Endothelial cell of umbilical vein (primary cell): ENCODE measurements at regions of chr5 and their contacts with region 1.

Region 1: GRCh38 chr5:127959152-127959764 is 124.3 kb upstream of the SLC12A2 start:
- DNase-seq: peak; percentile 86
- H3K4me3 ChIP-seq: no peak overlapping the region
- H3K27ac ChIP-seq: peak overlapping the region; percentile 64
- H3K4me1 ChIP-seq: peaks cover 44% of the 10 kb centered on the region
- H3K27me3 ChIP-seq: no peaks in the 10 kb centered on the region
- CTCF ChIP-seq: no peak
- POLR2A ChIP-seq: no peak

Region 2: DNA sequence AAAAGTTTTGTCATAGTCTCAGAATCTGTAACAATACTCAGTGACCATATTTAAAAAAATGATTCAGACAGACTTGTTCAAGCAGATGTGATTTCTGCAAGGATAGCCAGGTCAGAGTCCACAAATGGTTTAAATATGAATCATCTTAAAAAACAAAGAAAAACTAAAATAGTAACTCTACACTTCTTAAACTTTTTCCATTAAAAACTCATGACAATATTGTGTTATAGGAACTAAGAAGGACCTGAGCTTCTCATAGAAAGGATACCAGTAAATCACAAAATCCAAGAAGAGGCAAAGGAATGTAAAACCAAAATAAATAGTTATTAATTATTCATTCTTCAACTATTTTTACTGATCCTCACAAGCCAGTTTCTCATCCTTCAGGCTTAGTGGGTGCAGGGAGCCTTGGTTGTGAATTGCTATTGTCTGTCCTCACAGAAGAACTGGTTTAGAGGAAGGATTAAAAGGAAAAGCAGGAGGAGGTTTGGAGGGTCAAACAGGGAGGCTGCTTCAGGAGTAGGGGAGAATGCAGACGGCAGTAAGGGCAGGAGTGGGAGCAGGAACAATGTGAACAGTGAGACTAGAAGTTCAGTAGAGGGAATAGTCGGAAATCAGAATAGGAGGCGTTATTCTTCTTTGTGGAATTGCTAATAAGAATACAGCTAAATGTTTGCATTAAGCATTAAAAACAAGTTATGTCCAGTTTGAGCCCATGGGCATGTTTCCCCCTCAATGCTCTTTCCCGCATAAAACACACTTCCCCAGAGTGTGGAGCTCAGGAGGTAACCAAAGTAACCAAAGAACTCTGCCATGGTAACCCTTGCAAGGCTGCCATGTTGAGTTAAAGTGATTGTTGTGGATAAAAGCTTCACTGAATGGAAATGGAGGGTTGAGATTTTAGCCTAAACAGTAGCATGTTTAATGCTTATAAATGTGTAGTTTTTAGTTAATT is 145.3 kb before region 1 on chr5:
- CTCF ChIA-PET with region 1: no interaction called
- POLR2A ChIA-PET with region 1: no interaction called
- dilution Hi-C with region 1: no loop called
- intact Hi-C with region 1: loop called (anchors 2 kb)
- DNase-seq: peak; percentile 83
- H3K4me3 ChIP-seq: no peak overlapping the region
- H3K27ac ChIP-seq: peak overlapping the region; percentile 76
- H3K4me1 ChIP-seq: peaks cover 23% of the 10 kb centered on the region
- H3K27me3 ChIP-seq: no peaks in the 10 kb centered on the region
- CTCF ChIP-seq: no peak
- POLR2A ChIP-seq: no peak

Region 3: GRCh38 chr5:127885176-127885575 is 74.1 kb before region 1 on chr5:
- CTCF ChIA-PET with region 1: interaction called, 4 read pairs
- POLR2A ChIA-PET with region 1: no interaction called
- dilution Hi-C with region 1: no loop called
- intact Hi-C with region 1: loop called (anchors 2 kb)
- DNase-seq: peak; percentile 25
- H3K4me3 ChIP-seq: no peak overlapping the region
- H3K27ac ChIP-seq: no peak overlapping the region
- H3K4me1 ChIP-seq: peaks cover 14% of the 10 kb centered on the region
- H3K27me3 ChIP-seq: no peaks in the 10 kb centered on the region
- CTCF ChIP-seq: no peak
- POLR2A ChIP-seq: no peak

Region 4: DNA sequence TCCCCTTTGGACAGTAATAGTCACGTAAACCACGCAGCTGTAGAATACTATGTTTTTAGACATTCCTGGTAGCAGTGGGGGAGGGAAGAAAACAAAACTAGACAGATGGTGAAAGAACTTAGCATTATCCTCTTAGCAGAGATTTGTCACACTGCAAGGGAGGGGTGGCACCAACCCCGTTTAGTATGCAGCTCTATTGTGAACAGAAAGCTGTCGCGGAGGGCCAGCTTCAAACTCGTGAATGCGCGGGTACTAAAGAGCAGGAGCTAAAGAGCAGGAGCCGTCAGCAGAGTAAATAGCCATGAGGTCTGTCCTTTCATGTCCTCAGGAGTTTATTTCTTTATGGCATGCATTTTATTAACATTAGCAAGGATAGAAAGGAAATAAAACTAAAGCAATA is 17.6 kb before region 1 on chr5:
- CTCF ChIA-PET with region 1: interaction called, 3 read pairs
- POLR2A ChIA-PET with region 1: no interaction called
- dilution Hi-C with region 1: no loop called
- intact Hi-C with region 1: loop called (anchors 1 kb)
- DNase-seq: no peak
- H3K4me3 ChIP-seq: no peak overlapping the region
- H3K27ac ChIP-seq: no peak overlapping the region
- H3K4me1 ChIP-seq: peaks cover 8% of the 10 kb centered on the region
- H3K27me3 ChIP-seq: no peaks in the 10 kb centered on the region
- CTCF ChIP-seq: no peak
- POLR2A ChIP-seq: no peak

Region 5: DNA sequence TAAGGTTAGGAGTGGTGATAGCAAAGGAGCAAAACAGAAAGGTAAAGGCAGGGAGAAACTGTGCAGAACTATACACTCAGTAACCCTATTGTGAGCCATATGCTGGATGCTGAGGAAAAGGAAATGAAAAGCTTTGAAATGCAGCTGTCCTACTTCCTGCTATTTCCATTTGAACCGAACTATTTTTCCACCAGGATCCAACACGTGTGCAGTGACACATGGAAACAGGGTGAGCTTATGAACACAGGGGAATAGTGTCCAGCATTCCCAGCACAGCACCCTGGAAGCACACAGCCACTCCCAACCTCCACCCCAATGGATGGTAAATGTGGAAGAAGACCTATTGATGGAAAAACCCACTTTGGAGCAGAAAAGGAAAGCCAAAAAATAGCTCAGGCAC is 55.3 kb after region 1 on chr5:
- CTCF ChIA-PET with region 1: interaction called, 3 read pairs
- POLR2A ChIA-PET with region 1: no interaction called
- dilution Hi-C with region 1: no loop called
- intact Hi-C with region 1: loop called (anchors 2 kb)
- DNase-seq: peak; percentile 64
- H3K4me3 ChIP-seq: no peak overlapping the region
- H3K27ac ChIP-seq: no peak overlapping the region
- H3K4me1 ChIP-seq: peaks cover 23% of the 10 kb centered on the region
- H3K27me3 ChIP-seq: no peaks in the 10 kb centered on the region
- CTCF ChIP-seq: no peak
- POLR2A ChIP-seq: no peak

Region 6: GRCh38 chr5:128201065-128201926 is 242.0 kb after region 1 on chr5:
- CTCF ChIA-PET with region 1: interaction called, 7 read pairs
- POLR2A ChIA-PET with region 1: no interaction called
- dilution Hi-C with region 1: no loop called
- intact Hi-C with region 1: loop called (anchors 1 kb)
- DNase-seq: peak; percentile 63
- H3K4me3 ChIP-seq: no peak overlapping the region
- H3K27ac ChIP-seq: no peak overlapping the region
- H3K4me1 ChIP-seq: peaks cover 10% of the 10 kb centered on the region
- H3K27me3 ChIP-seq: no peaks in the 10 kb centered on the region
- CTCF ChIP-seq: peak; percentile 79 to 85
- POLR2A ChIP-seq: no peak